GM10248 (cell line): ENCODE measurements at regions of chr12 and their contacts with region 1.

Region 1: GRCh38 chr12:49538510-49539403 is at the start of gene KCNH3:
- DNase-seq: peak; percentile 94
- CTCF ChIP-seq: no peak

Region 2: DNA sequence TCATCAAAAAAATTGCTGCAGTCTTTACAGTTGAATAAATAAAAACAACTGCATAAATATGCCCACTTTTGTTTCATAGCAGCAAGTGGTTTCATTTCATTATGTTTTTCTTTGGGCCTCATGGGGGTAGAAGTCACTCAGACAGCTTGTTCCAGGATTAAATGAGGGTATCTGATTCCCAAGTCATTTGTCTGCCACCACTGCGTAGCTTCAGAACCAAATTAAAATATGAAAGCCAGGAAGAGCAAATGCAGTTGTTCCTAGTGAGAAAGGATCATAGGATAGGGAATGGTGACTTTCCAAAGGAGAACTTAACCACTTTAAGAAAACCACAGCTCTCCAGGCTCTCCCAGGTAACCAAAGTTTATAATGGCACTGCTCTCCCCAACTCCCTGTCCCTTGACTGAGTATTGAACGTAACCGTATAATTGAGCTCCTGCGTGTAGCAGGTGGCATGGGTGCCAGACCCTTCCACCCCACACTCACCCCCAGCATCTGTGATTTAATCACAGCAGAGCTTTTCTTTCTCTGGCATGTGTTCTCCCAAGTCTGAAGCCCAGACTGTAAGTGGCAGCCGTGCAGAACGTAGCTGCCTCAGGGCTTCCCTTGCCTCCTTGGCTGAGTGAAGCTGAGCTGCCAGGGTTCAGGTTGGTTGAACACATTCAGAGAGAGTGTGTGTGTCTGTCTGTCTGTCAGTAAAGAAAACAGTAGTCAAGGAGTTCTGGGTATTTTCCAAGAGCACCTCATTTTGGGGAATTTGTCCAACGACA is 11.2 kb before region 1 on chr12:
- CTCF ChIA-PET with region 1: interaction called, 11 read pairs
- POLR2A ChIA-PET with region 1: no interaction called
- DNase-seq: no peak
- CTCF ChIP-seq: no peak

Region 3: GRCh38 chr12:49588721-49589516 is 50.2 kb after region 1 on chr12:
- CTCF ChIA-PET with region 1: no interaction called
- POLR2A ChIA-PET with region 1: no interaction called
- DNase-seq: no peak
- CTCF ChIP-seq: no peak